ENCODE measurements at regions of chr15 and their contacts with region 1.

Region 1: DNA sequence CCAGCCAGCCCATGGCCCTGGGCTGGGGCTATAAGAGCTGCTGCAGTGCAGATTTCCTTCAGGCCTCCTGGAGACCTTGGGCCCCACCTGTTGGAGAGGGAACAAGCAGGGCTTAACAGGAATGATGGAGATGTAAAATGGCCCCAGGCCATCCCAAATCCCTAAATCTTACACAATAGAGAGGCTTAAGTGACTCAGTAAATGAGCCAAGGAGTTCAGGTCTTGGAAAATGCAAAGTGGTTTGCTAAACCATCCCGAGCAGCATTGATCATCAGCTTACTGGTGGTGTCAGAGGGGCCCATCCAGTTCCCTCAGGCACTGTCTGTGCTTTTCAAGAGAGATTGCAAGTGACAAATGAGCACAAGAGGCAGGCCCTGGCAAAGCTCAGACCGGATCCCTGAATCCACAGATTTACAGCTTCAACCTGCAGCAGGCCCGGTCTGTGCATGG is 325.5 kb downstream of the UACA start:
- DNase-seq: peak; percentile 65
- H3K4me3 ChIP-seq: no peak overlapping the region
- H3K27ac ChIP-seq: no peak overlapping the region; a peak in 1 of 4 replicates
- H3K4me1 ChIP-seq: peaks cover 0 to 44% of the 10 kb centered on the region in 2 experiments; a peak in 2 of 4 replicates
- H3K27me3 ChIP-seq: peaks cover 4% of the 10 kb centered on the region; the same call in 1 of the 2 replicates
- CTCF ChIP-seq: no peak
- EP300 ChIP-seq: peak in 1 of 2 experiments; percentile 32; a peak in 1 of 4 replicates
- RAD21 ChIP-seq: no peak

Region 2: DNA sequence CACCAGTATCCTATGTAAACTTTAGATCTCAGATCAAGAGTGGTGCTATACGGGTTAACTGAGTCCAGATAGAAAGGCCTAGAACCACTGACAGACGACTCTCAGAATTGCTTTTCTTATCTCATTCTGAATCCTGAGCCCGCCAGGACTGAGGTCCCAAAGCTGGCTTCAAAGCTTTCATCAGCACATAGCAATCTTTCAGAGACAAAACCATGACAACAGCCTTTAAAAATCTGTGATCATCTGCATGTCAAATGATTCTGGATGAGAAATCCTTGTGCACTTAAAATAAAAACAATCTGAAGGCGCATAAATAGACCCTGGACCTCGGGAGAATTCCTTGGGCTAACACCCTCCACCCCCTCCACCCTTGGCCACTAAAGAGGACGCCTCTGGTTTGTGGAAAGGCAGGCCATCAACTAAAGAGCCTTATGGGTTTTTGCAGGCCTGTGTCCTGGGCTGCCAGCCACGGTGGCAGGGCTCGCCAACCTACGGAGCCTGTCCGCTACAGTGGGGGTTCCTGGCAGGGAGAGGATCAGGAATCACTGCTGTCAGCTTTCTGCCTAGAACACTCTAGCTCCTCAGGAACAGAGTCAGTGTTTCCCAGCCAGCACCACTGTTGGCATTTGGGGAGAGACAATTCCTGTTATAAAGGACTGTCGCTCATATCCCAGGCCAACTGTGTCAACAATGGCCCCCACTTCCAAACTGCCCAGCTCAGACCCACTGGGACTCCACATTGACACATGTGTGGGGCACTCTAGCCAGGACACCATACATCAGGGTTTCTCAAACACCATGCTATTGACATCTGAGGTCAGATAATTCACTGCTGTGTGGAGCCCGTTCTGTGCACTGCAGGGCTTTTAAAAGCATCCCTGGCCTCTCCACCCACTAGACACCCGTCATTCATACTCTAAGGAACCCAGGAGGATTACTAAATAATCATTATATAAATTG is 360.4 kb before region 1 on chr15:
- CTCF ChIA-PET with region 1: no interaction called
- POLR2A ChIA-PET with region 1: no interaction called
- DNase-seq: no peak
- H3K4me3 ChIP-seq: no peak overlapping the region
- H3K27ac ChIP-seq: no peak overlapping the region
- H3K4me1 ChIP-seq: peaks cover 0 to 26% of the 10 kb centered on the region in 2 experiments; a peak in 2 of 4 replicates
- H3K27me3 ChIP-seq: no peaks in the 10 kb centered on the region
- CTCF ChIP-seq: no peak
- EP300 ChIP-seq: no peak
- RAD21 ChIP-seq: no peak

Region 3: GRCh38 chr15:70362886-70363285 is 75.0 kb before region 1 on chr15:
- CTCF ChIA-PET with region 1: no interaction called
- POLR2A ChIA-PET with region 1: no interaction called
- DNase-seq: peak; percentile 71
- H3K4me3 ChIP-seq: no peak overlapping the region
- H3K27ac ChIP-seq: no peak overlapping the region; a peak in 1 of 4 replicates
- H3K4me1 ChIP-seq: peaks cover 0 to 14% of the 10 kb centered on the region in 2 experiments; a peak in 1 of 4 replicates
- H3K27me3 ChIP-seq: no peaks in the 10 kb centered on the region
- CTCF ChIP-seq: peak; percentile 54
- EP300 ChIP-seq: no peak
- RAD21 ChIP-seq: peak; percentile 71

Region 4: GRCh38 chr15:70459312-70459875 is 21.5 kb after region 1 on chr15:
- CTCF ChIA-PET with region 1: interaction called, 32 read pairs
- POLR2A ChIA-PET with region 1: no interaction called
- DNase-seq: no peak
- H3K4me3 ChIP-seq: no peak overlapping the region
- H3K27ac ChIP-seq: no peak overlapping the region
- H3K4me1 ChIP-seq: peaks cover 0 to 27% of the 10 kb centered on the region in 2 experiments; a peak in 2 of 4 replicates
- H3K27me3 ChIP-seq: no peaks in the 10 kb centered on the region
- CTCF ChIP-seq: no peak
- EP300 ChIP-seq: no peak
- RAD21 ChIP-seq: no peak

Measured in SK-N-SH (cell line).